ENCODE measurements at regions of chr15 and their contacts with region 1.

Region 1: DNA sequence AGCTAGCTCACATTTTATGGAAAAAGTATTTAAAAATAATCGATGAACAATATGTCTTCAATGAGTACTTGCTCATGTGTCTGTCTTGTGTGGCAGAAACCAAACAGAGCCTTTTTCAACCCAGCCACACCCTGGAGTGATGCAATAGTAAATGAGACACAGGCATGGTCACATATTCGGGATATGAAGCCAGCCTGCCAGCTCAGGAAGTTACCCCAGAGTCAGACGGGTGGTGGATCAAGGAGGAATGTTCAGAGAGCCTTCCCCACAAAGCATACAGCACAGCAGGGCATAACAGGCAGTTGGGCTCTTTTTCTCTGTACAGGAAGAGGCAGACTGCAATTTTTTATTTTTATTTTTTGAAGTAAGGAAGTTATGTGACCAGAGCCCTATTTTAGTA is 27.3 kb downstream of the LARP6 start:
- DNase-seq: peak; percentile 58 to 78
- ATAC-seq: peak; percentile 67 to 68; a peak in 5 of 6 replicates
- H3K4me3 ChIP-seq: no peak overlapping the region
- H3K27ac ChIP-seq: peak overlapping the region; percentile 69 to 85
- H3K4me1 ChIP-seq: peaks cover 41% of the 10 kb centered on the region
- CTCF ChIP-seq: no peak
- EP300 ChIP-seq: no peak
- POLR2A ChIP-seq: no peak
- RAD21 ChIP-seq: no peak

Region 2: GRCh38 chr15:70799667-70800450 is 26.8 kb before region 1 on chr15:
- CTCF ChIA-PET with region 1: interaction called, 16 read pairs
- POLR2A ChIA-PET with region 1: no interaction called
- DNase-seq: no peak
- ATAC-seq: peak in 1 of 2 experiments; percentile 18; a peak in 1 of 6 replicates
- H3K4me3 ChIP-seq: no peak overlapping the region
- H3K27ac ChIP-seq: peak overlapping the region; percentile 37 to 93; a peak in 5 of 6 replicates
- H3K4me1 ChIP-seq: peaks cover 38% of the 10 kb centered on the region
- CTCF ChIP-seq: no peak
- EP300 ChIP-seq: no peak
- POLR2A ChIP-seq: no peak
- RAD21 ChIP-seq: no peak

Region 3: DNA sequence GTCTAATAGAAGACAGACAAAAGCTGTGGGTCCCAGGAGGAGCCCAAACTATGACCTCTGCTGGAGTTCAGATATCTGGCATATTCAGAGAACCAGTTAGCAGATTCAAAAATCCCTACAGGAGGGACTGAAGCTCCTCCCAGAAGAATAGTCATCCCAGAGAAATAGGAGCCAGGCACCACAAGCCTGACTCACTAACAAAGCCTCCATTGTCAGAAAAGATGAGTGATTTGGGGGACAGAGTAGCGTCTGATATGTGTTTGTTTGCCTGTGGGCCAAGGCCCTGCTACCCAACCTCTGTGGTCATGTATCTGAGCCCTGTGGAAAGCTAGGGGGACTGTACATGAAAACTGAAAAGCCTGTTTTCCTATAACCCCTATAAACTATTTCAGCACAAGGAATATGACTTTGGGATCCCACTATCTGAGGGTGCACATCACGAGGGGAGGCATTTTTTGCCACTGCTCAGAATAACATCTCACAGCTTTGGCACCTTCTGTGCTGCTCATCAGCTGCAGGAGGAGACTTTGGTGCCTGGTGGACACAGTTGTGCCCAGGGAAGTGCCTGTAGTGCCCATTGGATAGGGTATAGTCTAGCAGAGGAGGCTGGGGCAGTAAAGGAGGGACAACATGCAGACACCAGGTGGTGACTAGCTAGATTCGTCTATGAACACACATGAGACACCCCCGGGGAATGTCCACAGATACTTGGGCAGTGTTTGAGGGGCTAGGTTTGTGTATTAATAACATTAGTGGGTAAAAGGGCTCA is 37.0 kb after region 1 on chr15:
- CTCF ChIA-PET with region 1: interaction called, 331 read pairs
- POLR2A ChIA-PET with region 1: interaction called, 5 read pairs
- DNase-seq: peak; percentile 79 to 83
- ATAC-seq: peak; percentile 95
- H3K4me3 ChIP-seq: no peak overlapping the region
- H3K27ac ChIP-seq: peak overlapping the region; percentile 81 to 84
- H3K4me1 ChIP-seq: peaks cover 22% of the 10 kb centered on the region
- CTCF ChIP-seq: no peak
- EP300 ChIP-seq: no peak
- POLR2A ChIP-seq: no peak
- RAD21 ChIP-seq: no peak

Measured in A549 (cell line).